SK-N-SH (cell line): ENCODE measurements at regions of chr11 and their contacts with region 1.

Region 1: DNA sequence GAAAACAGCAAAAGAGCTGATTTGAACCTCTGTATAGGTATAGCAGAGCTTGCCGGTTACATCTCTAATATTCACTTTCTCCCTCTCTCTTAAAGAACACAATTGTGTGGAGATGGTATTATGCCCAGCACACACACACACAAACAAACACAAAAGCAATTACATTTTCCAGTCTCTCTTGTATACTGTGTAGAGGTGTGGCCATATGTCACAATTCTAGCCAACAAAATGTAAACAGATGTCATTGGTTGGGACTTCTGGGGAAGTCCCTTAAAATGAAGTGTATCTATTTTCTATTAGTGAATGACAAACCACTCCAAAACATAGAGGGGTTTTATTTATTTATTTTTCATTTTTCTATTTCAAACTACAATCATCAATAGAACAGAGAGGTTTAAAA is 12.8 kb downstream of the KCTD14 start:
- DNase-seq: no peak
- H3K4me3 ChIP-seq: no peak overlapping the region
- H3K27ac ChIP-seq: no peak overlapping the region
- H3K4me1 ChIP-seq: no peaks in the 10 kb centered on the region
- H3K27me3 ChIP-seq: no peaks in the 10 kb centered on the region
- CTCF ChIP-seq: no peak
- EP300 ChIP-seq: no peak
- RAD21 ChIP-seq: no peak

Region 2: DNA sequence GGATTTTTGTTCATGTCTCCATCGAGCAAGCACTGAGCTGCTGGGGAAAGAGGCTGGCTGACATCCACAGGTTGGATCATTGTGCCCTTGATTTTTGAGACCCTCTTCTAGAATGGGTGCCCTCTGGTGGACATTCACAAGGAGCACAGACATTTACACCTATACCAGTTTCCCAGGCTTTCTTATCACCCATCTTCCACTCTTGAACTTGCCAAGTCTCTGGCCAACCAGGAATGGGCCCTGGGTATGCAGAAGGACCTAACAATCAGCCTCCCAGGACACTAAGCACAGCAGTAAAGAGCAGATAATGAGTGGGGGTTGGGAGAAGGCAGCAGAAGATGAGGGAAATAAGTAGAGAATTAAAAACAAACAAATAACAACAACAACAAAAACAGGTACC is 10.1 kb before region 1 on chr11:
- CTCF ChIA-PET with region 1: interaction called, 12 read pairs
- POLR2A ChIA-PET with region 1: interaction called, 3 read pairs
- DNase-seq: peak; percentile 67
- H3K4me3 ChIP-seq: no peak overlapping the region; a peak in 1 of 4 replicates
- H3K27ac ChIP-seq: no peak overlapping the region
- H3K4me1 ChIP-seq: peaks cover 3 to 5% of the 10 kb centered on the region in 2 experiments; a peak in 2 of 4 replicates
- H3K27me3 ChIP-seq: no peaks in the 10 kb centered on the region
- CTCF ChIP-seq: peak; percentile 73
- EP300 ChIP-seq: no peak
- RAD21 ChIP-seq: peak; percentile 68